ENCODE measurements at regions of chr5 and their contacts with region 1.

Region 1: DNA sequence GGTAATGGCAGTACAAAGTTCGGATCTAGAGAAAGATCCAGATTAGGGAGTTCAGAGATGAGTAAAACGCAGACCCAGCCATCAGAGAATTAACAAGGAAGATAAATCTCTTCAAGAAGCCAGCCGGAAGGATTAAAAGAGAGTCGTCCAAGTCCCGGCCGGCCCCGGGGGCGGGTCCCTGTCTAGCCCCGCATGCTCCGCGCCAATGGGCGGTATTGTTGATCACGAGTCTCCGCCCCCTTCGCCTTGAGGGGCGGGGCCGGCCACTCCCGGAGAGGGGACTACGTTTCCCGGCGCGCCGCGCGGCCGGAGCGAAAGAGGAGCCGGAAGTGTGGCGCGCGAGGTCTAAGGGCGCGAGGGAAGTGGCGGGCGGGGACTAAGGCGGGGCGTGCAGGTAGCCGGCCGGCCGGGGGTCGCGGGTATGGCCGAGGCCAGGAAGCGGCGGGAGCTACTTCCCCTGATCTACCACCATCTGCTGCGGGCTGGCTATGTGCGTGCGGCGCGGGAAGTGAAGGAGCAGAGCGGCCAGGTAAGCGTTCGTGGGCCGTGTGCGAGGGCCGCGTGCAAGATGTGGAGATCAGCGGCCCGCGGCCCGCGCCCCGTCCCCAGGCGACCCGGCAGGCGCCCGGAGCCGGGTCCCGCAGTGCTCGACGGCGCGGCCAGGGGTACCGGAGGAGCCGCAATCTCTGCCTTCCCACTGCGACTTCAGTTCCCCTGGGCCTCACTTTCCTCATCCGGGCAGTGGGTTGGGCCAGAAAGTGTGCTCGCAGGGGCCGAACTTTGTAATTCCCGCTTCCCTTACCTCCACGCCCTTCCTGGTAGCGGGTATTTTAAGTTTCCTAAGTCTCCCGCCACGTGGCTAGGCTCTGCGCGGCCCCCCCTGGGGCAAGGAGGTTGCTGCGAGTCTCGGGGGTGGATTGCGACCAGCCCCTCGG is at the start of gene TCOF1:
- DNase-seq: peak; percentile 99
- ATAC-seq: peak; percentile 99
- H3K4me3 Mint-ChIP-seq: peak within 1 kb of the TSS; percentile 87
- H3K27ac Mint-ChIP-seq: peak within 1 kb of the TSS; percentile 90
- H3K4me1 Mint-ChIP-seq: peaks cover 43% of the 10 kb centered on the region
- H3K27me3 Mint-ChIP-seq: no peaks in the 10 kb centered on the region
- total RNA-seq, gene TCOF1: 113 to 145 TPM

Region 2: DNA sequence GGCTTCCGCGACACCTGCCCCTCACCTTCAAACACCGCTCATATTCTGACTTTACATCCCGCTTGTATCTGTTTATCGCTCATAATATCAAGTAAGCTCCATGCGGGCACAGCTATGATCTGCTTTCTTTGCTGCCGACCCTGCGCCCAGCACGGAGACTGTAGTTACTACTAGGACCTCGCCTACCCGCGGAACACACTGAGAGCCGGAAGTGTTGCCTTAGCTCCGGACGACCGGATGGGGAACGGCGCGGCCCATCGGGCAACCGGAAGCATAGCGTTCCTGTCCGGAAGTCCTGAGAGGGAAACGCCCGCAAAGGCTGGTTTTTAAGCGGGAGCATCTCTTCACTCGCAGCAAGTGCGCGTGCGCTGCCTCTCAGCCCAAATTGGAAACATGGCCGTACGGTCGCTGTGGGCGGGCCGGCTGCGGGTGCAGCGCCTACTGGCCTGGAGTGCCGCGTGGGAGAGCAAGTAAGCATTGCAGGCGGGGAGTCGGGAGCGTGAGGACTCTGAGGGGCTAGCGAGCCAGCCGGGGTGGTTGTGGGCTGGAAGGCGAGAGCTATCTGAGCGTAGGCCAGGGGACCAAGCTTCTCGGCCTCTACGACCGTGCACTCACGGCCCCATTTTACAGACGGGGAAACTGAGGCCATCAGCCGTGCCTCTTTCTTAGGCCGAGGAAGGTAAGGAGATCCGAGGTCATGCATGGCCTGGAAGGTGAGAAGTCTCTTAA is 1012.3 kb before region 1 on chr5 and contains the start of gene GRPEL2:
- CTCF ChIA-PET with region 1: no interaction called
- POLR2A ChIA-PET with region 1: no interaction called
- intact Hi-C with region 1: loop called in 1 of 2 experiments (anchors 5 kb)
- DNase-seq: peak; percentile 97
- ATAC-seq: peak; percentile 89
- H3K4me3 Mint-ChIP-seq: peak within 1 kb of the TSS; percentile 96
- H3K27ac Mint-ChIP-seq: peak within 1 kb of the TSS; percentile 99
- H3K4me1 Mint-ChIP-seq: peaks cover 49% of the 10 kb centered on the region
- H3K27me3 Mint-ChIP-seq: no peaks in the 10 kb centered on the region
- total RNA-seq, gene GRPEL2: 27.1 to 37.2 TPM

Region 3: DNA sequence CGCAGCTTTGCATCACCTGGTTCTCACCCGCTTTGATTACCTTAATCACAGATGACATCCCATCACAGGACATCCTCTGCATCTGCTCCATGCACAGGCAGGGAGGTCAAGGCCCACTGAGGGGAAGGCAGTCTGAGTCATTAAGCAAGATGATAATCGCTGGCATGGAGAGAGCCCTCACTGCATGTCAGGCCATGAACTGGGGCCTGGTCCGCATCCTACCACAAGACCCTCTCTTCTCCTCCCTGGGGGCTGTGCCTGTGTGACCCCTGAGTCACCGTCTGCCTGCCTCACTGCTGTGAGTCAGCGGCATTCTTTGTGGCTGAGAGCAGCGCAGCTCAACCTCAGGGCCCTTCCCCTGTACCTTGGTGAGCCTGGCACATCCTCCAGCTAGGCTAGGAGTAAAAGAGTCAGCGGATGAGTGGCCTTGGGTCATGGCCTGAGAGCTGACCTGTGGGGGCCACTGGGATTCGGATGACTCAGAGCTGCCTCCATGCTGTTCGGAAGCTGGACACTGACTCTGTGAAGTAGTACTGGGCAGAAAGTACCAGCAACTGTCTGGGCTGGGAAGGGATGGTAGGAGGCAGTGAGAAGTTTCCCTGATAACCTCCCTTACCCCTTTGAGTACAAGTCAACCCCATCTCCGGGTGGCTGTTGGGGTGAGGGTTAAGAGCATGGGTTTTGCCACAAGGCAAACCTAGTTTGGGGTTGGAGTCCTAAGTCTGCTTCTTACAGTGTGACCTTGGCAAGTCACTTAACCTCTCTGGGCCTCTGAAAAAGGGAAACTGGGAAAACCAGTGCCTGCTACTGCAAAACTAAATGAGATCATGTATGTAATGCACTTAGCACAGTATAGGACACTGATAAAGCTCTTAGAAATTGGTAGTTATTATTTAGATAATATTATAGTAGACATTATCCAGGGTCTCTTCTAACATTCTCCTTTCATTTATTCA is 40.3 kb before region 1 on chr5:
- CTCF ChIA-PET with region 1: no interaction called
- POLR2A ChIA-PET with region 1: no interaction called
- intact Hi-C with region 1: no loop called
- DNase-seq: peak; percentile 31
- ATAC-seq: peak; percentile 80
- H3K4me3 Mint-ChIP-seq: no peak overlapping the region
- H3K27ac Mint-ChIP-seq: no peak overlapping the region
- H3K4me1 Mint-ChIP-seq: peaks cover 6% of the 10 kb centered on the region
- H3K27me3 Mint-ChIP-seq: peaks cover 6% of the 10 kb centered on the region

Region 4: DNA sequence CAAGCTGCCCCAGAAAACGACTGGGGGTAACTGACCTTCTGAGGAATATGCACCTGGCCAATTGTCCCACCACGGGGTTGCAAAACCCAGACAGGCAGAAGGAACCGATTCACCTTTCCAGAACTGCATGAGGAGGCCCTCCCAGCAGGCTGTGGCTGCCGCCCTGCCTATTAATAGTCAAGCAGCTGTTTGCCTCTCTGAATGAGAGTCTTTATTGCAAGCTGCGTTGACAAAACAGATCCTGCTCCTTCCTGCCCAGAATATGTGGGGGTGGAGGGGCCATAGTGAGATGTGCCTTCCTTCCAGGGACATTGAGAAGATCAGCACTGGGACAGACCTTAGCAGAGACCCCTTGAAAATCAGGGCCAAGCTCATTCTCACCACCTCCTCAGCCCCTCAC is 18.4 kb before region 1 on chr5:
- CTCF ChIA-PET with region 1: no interaction called
- POLR2A ChIA-PET with region 1: no interaction called
- intact Hi-C with region 1: no loop called
- DNase-seq: no peak
- ATAC-seq: no peak
- H3K4me3 Mint-ChIP-seq: no peak overlapping the region
- H3K27ac Mint-ChIP-seq: no peak overlapping the region
- H3K4me1 Mint-ChIP-seq: peaks cover 2% of the 10 kb centered on the region
- H3K27me3 Mint-ChIP-seq: no peaks in the 10 kb centered on the region

Region 5: DNA sequence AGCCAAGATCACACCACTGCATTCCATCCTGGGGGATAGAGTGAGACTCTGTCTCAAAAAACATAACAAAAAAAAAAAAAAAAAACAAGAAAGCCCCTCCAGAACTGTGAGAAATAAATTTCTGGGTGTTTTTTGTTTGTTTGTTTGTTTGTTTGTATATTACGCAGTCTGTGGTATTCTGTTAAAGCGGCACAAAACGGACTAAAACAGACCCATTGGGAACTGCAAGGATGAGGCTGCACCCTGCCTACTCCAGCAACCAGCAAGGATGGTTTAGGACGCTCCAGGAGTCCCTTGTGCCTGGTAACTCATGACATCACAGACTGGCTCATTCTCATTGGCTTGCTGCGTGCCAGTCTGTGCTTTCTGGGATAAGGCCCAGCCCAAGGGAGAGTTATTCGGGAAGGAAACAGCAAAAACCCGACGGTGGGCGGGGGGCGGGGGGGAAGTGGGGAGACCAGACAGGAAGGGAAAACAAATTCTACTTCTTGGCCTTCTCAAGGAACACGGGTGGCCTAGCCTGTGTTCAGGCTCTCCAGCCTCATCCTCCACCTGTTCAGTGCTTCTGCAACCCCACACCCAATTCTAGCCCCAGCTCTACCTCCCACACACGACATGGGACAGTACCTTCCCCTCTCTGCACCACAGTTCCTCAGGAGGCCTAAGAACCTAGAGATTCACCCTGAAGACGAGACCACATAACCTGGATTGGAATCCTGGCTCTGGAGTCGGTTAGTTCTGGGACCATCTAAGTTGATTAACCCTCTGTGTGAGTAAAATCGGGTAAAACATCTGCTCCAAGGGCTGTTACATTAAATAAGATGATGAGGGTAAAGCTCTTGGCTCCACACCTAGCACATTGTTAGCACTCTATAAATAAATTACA is 52.3 kb after region 1 on chr5:
- CTCF ChIA-PET with region 1: no interaction called
- POLR2A ChIA-PET with region 1: interaction called, 3 read pairs
- intact Hi-C with region 1: loop called (anchors 1 to 2 kb)
- DNase-seq: peak; percentile 66
- ATAC-seq: peak; percentile 40
- H3K4me3 Mint-ChIP-seq: peak overlapping the region; percentile 99
- H3K27ac Mint-ChIP-seq: peak overlapping the region; percentile 99
- H3K4me1 Mint-ChIP-seq: peaks cover 36% of the 10 kb centered on the region
- H3K27me3 Mint-ChIP-seq: no peaks in the 10 kb centered on the region

Region 6: DNA sequence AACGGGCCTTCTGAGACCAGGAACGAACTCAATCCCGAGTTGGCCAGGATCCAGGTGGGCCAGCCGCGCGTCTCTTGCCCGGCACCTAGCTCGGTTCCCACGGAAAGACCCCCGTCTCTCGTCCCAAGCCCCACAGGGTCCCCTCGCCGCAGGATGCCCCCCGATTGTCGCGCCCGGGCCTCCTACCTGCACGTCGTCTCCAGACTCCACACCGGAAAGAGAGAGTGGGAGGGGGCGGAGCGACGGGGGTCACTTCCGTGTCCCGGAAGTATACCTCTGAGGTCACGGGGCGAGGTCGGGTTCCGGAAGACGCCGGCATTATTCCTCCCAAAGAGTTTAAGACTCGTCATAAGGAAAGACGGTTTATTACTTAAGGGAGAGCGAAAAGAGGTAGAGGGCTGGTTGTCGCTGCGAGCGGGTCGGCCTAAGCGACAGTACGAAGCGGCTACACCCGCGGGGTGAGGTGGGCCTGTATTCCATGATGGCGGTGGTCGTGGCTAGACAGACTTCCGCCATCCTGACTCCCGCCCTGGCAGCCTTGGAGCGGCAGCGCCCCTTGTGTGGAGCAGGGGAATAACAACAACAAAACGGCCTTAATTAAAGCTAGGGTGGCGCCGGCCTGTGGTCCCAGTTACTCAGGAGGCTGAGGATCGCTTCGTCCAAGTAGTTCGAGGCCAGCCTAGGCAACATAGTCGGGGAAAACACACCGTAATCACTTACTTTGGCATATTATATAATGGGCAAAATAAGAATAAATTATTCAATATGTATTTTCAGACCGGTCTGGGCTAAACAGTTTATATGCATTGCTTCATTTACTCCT is 92.1 kb after region 1 on chr5 and contains the start of gene RPS14:
- CTCF ChIA-PET with region 1: interaction called, 4 read pairs
- POLR2A ChIA-PET with region 1: no interaction called
- intact Hi-C with region 1: loop called in 1 of 2 experiments (anchors 1 kb)
- DNase-seq: peak; percentile 96
- ATAC-seq: peak; percentile 93
- H3K4me3 Mint-ChIP-seq: peak within 1 kb of the TSS; percentile 95
- H3K27ac Mint-ChIP-seq: peak within 1 kb of the TSS; percentile 99
- H3K4me1 Mint-ChIP-seq: peaks cover 31% of the 10 kb centered on the region
- H3K27me3 Mint-ChIP-seq: no peaks in the 10 kb centered on the region
- total RNA-seq, gene RPS14: 2,270 to 3,312 TPM

Region 7: DNA sequence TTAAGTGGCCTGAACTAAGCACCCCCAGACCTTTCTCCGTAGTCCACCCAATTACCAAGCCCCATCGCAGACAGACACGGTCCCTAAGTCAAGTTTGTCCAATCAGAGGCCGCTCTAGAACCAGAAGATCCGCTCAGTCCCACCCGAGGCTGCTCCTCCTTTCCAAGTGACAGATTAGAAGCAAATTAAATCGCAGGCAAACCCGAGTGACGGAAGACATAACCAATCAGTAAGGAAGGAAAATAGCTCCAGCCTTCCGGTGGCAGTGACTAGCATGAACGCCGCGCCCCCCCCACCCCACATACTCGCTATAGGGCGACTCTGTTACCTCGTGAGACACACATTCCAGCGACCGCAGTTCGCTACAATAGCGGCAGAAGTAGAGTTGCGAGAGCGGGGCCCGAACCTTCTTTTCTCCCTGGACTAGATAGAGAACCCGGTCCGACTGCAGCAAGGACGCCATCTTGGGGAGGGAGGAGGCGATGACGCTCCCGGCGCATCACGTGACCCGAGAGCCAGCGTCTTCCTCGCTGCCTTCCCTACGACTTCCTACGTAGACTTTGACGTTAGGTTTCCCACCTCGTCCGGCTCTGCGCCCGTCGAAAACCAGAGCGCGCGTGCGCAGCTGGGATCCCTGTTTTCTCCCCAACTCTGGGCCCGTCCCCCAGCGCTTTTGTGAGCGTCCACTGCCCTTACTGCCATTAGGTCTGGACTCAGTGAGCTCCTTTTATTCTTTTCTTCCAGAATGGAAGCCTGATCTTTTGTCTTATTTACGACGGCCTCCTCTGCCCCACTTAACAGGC is 401.1 kb after region 1 on chr5 and contains the start of gene DCTN4:
- CTCF ChIA-PET with region 1: no interaction called
- POLR2A ChIA-PET with region 1: no interaction called
- intact Hi-C with region 1: loop called in 1 of 2 experiments (anchors 1 kb)
- DNase-seq: peak; percentile 96
- ATAC-seq: peak; percentile 96
- H3K4me3 Mint-ChIP-seq: no peak within 1 kb of the TSS
- H3K27ac Mint-ChIP-seq: no peak within 1 kb of the TSS
- H3K4me1 Mint-ChIP-seq: peaks cover 37% of the 10 kb centered on the region
- H3K27me3 Mint-ChIP-seq: no peaks in the 10 kb centered on the region
- total RNA-seq, gene DCTN4: 31.7 to 49.0 TPM